Activated CD4-positive, alpha-beta T cell treated with anti-CD3 and anti-CD28 coated beads, Interleukin-2, amount 10 ng/mL, durations not matched to agents 24 days and 14 days (primary cell): ENCODE measurements at regions of chr2 and their contacts with region 1.

Region 1: DNA sequence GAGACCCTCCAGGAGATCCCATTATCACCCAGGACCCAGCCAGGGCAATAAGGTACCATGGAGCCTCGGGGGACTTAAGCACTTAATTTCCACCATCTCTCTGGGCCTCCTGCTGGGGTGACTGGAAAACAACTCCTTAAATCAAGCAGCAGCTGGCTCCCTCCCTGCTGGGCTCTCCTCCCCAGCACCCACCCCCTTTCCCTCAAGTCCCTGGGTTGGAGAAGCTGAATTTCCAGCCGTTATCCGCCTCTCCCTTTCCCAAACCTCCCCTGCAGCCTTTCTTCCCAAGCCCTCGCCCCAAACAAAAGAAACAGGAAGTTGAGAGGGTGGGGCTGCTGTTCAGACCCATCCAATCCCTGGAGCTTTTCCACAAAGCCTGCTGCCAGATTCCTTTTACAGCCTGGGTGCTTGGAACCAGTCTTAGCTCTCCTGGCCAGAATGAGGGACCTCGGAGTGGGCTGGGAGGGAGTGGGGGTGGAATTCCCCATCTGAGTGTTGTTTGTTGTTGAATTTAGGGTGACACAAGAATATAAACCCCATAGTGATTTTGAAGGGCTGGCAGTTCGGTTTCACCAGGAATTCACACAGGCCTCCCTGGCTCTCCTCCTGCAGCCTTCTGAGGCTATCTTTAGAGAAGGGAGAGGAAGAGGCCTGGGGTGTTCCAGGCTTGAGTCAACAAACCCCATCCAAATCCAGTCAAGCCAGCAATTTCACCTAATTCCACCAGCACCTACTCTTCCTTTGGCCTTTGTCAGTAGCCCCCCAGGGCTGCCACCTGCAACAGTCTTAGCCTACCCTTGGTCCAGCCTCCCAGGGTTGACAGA is 32.3 kb downstream of the MARCHF4 start:
- DNase-seq: no peak
- H3K4me3 Mint-ChIP-seq: no peak overlapping the region
- H3K27ac Mint-ChIP-seq: no peak overlapping the region
- H3K4me1 Mint-ChIP-seq: peaks cover 10% of the 10 kb centered on the region
- H3K27me3 Mint-ChIP-seq: peaks cover 23% of the 10 kb centered on the region

Region 2: GRCh38 chr2:216478151-216478550 is 138.1 kb after region 1 on chr2:
- intact Hi-C with region 1: loop called (anchors 10 kb)
- DNase-seq: no peak
- H3K4me3 Mint-ChIP-seq: no peak overlapping the region
- H3K27ac Mint-ChIP-seq: no peak overlapping the region
- H3K4me1 Mint-ChIP-seq: peaks cover 19% of the 10 kb centered on the region
- H3K27me3 Mint-ChIP-seq: no peaks in the 10 kb centered on the region